Activated T-helper 2 cell treated with anti-CD3 and anti-CD28 coated beads, Interferon-gamma antibody, Interleukin-2, Interleukin-4, amounts not matched to agents 10 μg/mL and 5 μg/mL and 100 μg/mL, durations not matched to agents 14 hours and 24 hours and 36 hours (primary cell): ENCODE measurements at regions of chr3 and their contacts with region 1.

Region 1: GRCh38 chr3:157572559-157573270 is 69.5 kb upstream of the VEPH1 start:
- DNase-seq: no peak
- H3K4me3 Mint-ChIP-seq: no peak overlapping the region
- H3K27ac Mint-ChIP-seq: no peak overlapping the region
- H3K4me1 Mint-ChIP-seq: peaks cover 4% of the 10 kb centered on the region
- H3K27me3 Mint-ChIP-seq: peaks cover 5% of the 10 kb centered on the region

Region 2: DNA sequence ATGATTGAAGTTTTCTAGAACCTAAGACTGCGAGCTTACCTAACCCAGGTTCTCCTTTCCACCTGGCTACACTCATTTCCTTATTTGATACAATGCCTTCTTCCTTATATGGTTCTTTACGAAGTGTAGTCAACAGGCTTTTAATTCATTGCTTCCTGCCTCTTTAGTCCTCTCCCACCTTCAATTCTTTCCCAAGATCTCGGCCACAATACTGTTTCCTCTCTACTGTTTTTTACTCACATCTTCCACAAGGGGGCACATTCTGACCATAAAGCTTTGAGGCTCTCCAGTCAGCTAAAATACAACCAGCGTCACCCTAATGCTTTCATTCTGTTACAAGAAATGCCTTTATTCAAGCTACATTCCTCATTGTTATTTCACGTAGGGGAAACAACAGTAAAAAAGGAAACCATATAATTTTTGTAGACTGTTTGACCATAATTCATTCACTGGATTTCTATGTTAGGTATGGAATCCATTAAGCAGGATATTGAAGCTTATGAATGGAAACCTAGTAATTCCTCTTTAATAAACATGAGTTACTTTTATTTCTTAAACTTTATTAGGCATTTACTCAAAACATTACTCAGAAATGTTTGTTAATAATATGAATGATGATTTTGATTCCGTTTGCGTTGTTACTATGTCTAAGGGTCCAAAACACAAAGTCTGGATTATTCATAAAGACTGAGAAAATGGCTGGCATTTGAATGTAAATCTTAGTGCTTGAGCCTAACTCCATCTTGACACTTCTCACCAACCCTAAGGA is 40.0 kb before region 1 on chr3:
- intact Hi-C with region 1: loop called (anchors 1 kb)
- DNase-seq: no peak
- H3K4me3 Mint-ChIP-seq: no peak overlapping the region
- H3K27ac Mint-ChIP-seq: no peak overlapping the region
- H3K4me1 Mint-ChIP-seq: no peaks in the 10 kb centered on the region
- H3K27me3 Mint-ChIP-seq: peaks cover 8% of the 10 kb centered on the region